ENCODE measurements at regions of chrX and their contacts with region 1.

Region 1: GRCh38 chrX:71378732-71379131 is 12.6 kb downstream of the TAF1 start:
- DNase-seq: no peak
- H3K4me3 ChIP-seq: no peak overlapping the region
- H3K4me1 ChIP-seq: no peaks in the 10 kb centered on the region
- H3K27me3 ChIP-seq: no peaks in the 10 kb centered on the region

Region 2: GRCh38 chrX:71292669-71293365 is 85.9 kb before region 1 on chrX:
- in situ Hi-C with region 1: loop called (anchors 5 kb)
- DNase-seq: no peak
- H3K4me3 ChIP-seq: no peak overlapping the region
- H3K4me1 ChIP-seq: peaks cover 3% of the 10 kb centered on the region; the same call in 1 of the 2 replicates
- H3K27me3 ChIP-seq: no peaks in the 10 kb centered on the region

Region 3: GRCh38 chrX:71420686-71421085 is 42.0 kb after region 1 on chrX:
- in situ Hi-C with region 1: loop called (anchors 5 kb)
- DNase-seq: no peak
- H3K4me3 ChIP-seq: no peak overlapping the region
- H3K4me1 ChIP-seq: no peaks in the 10 kb centered on the region
- H3K27me3 ChIP-seq: no peaks in the 10 kb centered on the region

Region 4: GRCh38 chrX:71809886-71810285 is 431.2 kb after region 1 on chrX:
- in situ Hi-C with region 1: no loop called
- DNase-seq: no peak
- H3K4me3 ChIP-seq: no peak overlapping the region
- H3K4me1 ChIP-seq: no peaks in the 10 kb centered on the region
- H3K27me3 ChIP-seq: no peaks in the 10 kb centered on the region

Measured in HAP-1 (cell line).